MCF 10A (cell line): ENCODE measurements at regions of chr15 and their contacts with region 1.

Region 1: DNA sequence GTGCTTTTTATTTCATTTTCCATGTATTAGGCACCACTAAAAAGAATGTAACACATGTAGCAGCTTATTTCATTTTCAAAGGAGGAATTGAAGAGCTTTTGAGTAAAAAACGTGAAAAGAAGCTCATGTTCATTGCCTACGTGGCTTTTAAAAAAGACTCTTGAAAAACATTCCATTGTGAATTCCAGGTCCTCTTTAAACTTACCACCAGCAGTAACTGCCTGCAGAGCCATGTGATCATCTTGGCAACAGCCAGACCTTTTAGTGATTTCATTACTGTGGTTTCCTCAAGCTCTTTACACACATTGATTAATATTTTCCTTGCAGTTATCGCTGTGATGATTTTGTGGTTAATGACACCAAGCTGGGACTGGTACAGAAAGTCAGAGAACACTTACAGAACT is 43.8 kb upstream of the FBXL22 start:
- DNase-seq: peak; percentile 62
- H3K4me3 Mint-ChIP-seq: peak overlapping the region; percentile 30
- H3K27ac Mint-ChIP-seq: peak overlapping the region; percentile 6
- H3K4me1 Mint-ChIP-seq: peaks cover 22% of the 10 kb centered on the region
- H3K27me3 Mint-ChIP-seq: no peaks in the 10 kb centered on the region
- CTCF ChIP-seq: no peak

Region 2: GRCh38 chr15:63466378-63467192 is 86.8 kb before region 1 on chr15:
- CTCF ChIA-PET with region 1: interaction called, 8 read pairs
- POLR2A ChIA-PET with region 1: interaction called, 7 read pairs
- intact Hi-C with region 1: loop called (anchors 5 kb)
- DNase-seq: peak; percentile 82
- H3K4me3 Mint-ChIP-seq: no peak overlapping the region
- H3K27ac Mint-ChIP-seq: no peak overlapping the region
- H3K4me1 Mint-ChIP-seq: no peaks in the 10 kb centered on the region
- H3K27me3 Mint-ChIP-seq: no peaks in the 10 kb centered on the region
- CTCF ChIP-seq: peak; percentile 61

Region 3: DNA sequence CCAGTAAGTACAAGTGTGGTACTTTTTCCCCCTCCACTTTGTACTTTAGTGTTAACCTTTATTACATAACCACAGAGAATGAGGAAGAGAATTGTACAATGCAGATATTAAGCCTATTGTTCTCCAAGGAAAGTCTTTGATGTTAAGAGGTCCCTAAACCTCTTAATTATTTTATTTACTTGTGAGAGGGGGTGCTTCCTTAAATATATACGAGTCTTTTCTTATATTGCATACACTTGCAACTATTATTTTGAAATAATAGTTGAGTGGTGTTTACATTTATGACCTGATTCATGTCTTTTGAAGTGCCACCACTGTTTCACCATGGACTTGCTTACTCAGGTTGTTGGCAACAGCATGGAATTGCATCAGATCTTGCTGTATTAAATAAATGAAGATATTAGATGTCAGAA is 38.9 kb before region 1 on chr15:
- CTCF ChIA-PET with region 1: no interaction called
- POLR2A ChIA-PET with region 1: interaction called, 46 read pairs
- intact Hi-C with region 1: no loop called
- DNase-seq: peak; percentile 93
- H3K4me3 Mint-ChIP-seq: peak overlapping the region; percentile 51
- H3K27ac Mint-ChIP-seq: peak overlapping the region; percentile 94
- H3K4me1 Mint-ChIP-seq: peaks cover 73% of the 10 kb centered on the region
- H3K27me3 Mint-ChIP-seq: no peaks in the 10 kb centered on the region
- CTCF ChIP-seq: no peak

Region 4: DNA sequence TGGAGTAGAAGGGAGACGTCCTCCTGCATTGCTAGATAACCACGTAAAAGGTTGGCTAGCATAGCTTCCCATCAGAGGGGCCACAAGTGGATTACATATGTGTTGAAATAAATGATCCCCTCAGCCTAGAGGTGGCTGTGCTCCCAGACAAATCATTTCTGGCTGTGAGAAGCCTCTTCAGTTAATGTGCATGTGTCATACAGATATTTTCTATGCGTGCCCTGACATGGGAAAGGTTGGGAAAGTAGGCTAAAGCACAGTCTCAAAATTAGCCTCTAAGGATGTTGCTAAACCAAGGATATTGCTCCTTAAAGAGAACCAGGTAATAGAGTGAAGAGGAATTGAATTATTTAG is 31.2 kb before region 1 on chr15:
- CTCF ChIA-PET with region 1: no interaction called
- POLR2A ChIA-PET with region 1: interaction called, 46 read pairs
- intact Hi-C with region 1: no loop called
- DNase-seq: peak; percentile 73
- H3K4me3 Mint-ChIP-seq: no peak overlapping the region
- H3K27ac Mint-ChIP-seq: peak overlapping the region; percentile 41
- H3K4me1 Mint-ChIP-seq: peaks cover 64% of the 10 kb centered on the region
- H3K27me3 Mint-ChIP-seq: no peaks in the 10 kb centered on the region
- CTCF ChIP-seq: no peak

Region 5: GRCh38 chr15:63539998-63540397 is 13.4 kb before region 1 on chr15:
- CTCF ChIA-PET with region 1: interaction called, 5 read pairs
- POLR2A ChIA-PET with region 1: interaction called, 13 read pairs
- intact Hi-C with region 1: no loop called
- DNase-seq: no peak
- H3K4me3 Mint-ChIP-seq: no peak overlapping the region
- H3K27ac Mint-ChIP-seq: no peak overlapping the region
- H3K4me1 Mint-ChIP-seq: peaks cover 10% of the 10 kb centered on the region
- H3K27me3 Mint-ChIP-seq: no peaks in the 10 kb centered on the region
- CTCF ChIP-seq: no peak